ENCODE measurements at regions of chr14 and their contacts with region 1.

Region 1: DNA sequence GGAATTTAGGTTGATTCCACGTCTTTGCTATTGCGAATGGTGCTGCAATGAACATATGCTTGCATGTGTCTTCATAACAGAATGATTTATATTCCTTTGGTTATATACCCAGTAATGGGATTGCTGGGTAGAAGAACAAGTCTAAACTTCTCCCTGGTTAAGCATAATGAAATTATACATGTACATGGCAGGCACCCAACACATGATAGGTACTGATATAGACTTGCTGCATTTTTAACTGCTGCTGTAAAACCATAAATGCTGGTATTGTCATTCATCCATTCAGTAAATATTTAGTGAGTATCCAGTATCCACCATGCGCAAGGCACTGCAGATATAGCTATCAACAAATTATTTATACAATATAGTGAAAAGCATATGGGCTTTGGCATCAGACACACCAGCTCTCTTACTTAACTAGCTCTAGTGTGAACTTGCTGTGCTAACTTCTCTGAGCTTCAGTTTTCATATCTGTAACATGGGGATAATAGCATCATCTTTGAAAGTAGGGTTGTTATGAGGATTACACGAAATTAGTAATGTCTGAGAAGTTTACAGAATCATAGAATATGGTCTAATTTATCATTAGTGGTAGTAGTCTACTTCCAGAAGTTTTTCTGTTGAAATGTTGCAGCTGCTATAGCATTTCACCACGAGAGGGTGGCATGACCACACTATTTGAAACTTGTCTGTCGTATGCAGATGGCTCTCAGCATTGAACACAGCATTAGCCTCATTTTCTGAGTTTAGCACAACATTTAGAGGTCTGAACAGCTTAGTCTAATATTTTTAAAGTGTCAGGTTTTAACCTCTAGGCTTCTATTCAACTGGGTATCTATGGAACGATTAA is 32.0 kb upstream of the SEL1L start:
- DNase-seq: no peak
- H3K4me3 ChIP-seq: no peak overlapping the region
- H3K27ac ChIP-seq: no peak overlapping the region
- H3K4me1 ChIP-seq: peaks cover 3 to 18% (median 7%) of the 10 kb centered on the region in 4 experiments; a peak in 5 of 7 replicates
- H3K27me3 ChIP-seq: peaks cover 0 to 3% (median 0%) of the 10 kb centered on the region in 4 experiments; a peak in 1 of 7 replicates
- CTCF ChIP-seq: peak in 2 of 3 experiments; percentile 67 to 76; a peak in 3 of 4 replicates
- EP300 ChIP-seq: no peak
- POLR2A ChIP-seq: no peak
- RAD21 ChIP-seq: peak; percentile 91

Region 2: DNA sequence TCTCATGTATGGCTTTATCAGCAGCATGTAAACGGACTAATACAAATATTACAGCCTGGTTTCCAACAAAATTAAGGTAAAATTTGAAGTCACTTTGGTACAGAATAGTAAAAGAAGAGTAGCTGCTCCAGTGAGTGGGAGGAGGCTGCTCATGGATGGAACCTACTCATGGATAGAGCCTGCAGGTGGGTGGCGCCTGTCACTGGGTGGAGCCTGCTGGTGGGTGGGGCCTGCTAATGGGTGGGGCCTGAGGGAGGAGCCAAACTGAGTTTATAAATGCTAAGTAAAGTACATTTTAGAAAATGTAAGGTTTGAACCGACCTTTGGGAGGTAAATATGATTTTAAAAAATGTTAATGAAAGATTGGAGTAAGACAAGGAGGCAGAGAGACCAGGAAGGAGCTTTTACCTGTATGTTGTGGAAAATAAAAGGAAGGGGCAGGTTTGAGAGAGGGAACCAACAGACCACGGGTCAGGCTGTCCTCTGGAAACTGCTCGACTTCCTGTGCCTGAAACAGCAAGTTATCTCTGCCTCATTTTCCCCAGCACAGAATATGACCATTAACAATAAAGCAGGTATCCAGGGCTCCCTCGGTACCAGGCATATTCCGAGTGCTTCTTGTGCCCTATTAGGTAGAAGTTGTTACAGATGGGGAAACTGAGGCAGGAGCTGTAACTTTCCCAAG is 23.9 kb after region 1 on chr14:
- CTCF ChIA-PET with region 1: interaction called, 15 read pairs
- POLR2A ChIA-PET with region 1: no interaction called
- DNase-seq: no peak
- H3K4me3 ChIP-seq: no peak overlapping the region
- H3K27ac ChIP-seq: no peak overlapping the region
- H3K4me1 ChIP-seq: peaks cover 0 to 2% (median 0%) of the 10 kb centered on the region in 4 experiments; a peak in 1 of 7 replicates
- H3K27me3 ChIP-seq: no peaks in the 10 kb centered on the region
- CTCF ChIP-seq: no peak
- EP300 ChIP-seq: no peak
- POLR2A ChIP-seq: no peak
- RAD21 ChIP-seq: no peak

Measured in H1 (cell line).